Activated CD4-positive, alpha-beta T cell treated with anti-CD3 and anti-CD28 coated beads, Interleukin-2, amount 10 ng/mL, durations not matched to agents 24 days and 14 days (primary cell): ENCODE measurements at regions of chr1 and their contacts with region 1.

Region 1: GRCh38 chr1:160607011-160607671 is 27.8 kb upstream of the CD84 start:
- DNase-seq: peak; percentile 91
- H3K4me3 Mint-ChIP-seq: peak overlapping the region; percentile 62
- H3K27ac Mint-ChIP-seq: peak overlapping the region; percentile 81
- H3K4me1 Mint-ChIP-seq: peaks cover 55% of the 10 kb centered on the region
- H3K27me3 Mint-ChIP-seq: no peaks in the 10 kb centered on the region

Region 2: GRCh38 chr1:160474392-160475242 is 132.5 kb before region 1 on chr1:
- intact Hi-C with region 1: loop called (anchors 5 kb)
- DNase-seq: peak; percentile 56
- H3K4me3 Mint-ChIP-seq: no peak overlapping the region
- H3K27ac Mint-ChIP-seq: no peak overlapping the region
- H3K4me1 Mint-ChIP-seq: peaks cover 12% of the 10 kb centered on the region
- H3K27me3 Mint-ChIP-seq: no peaks in the 10 kb centered on the region

Region 3: DNA sequence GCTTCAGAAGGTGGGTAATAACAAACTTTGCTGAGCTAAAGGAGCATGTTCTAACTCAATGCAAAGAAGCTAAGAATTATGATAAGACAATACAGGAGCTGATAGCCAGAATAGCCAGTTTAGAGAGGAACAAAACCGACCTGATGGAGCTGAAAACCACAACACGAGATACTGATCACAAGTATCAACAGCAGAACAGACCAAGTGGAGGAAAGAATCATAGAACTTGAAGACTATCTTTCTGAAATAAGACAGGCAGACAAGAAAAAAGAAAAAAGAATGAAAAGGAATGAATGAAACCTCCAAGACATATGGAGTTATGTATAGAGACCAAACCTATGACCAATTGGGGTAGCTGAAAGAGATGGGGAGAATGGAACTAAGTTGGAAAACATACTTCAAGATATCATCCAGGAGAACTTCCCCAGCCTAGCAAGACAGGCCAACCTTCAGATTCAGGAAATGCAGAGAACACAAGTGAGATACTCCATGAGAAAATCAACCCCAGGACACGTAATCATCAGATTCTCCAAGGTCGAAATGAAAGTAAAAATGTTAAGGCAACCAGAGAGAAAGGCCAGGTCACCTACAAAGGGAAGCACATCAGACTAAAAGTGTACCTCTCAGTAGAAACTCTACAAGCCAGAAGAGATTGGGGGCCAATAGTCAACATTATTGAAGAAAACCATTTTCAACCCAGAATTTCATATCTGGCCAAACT is 48.3 kb before region 1 on chr1:
- intact Hi-C with region 1: loop called (anchors 2 kb)
- DNase-seq: no peak
- H3K4me3 Mint-ChIP-seq: peak overlapping the region; percentile 73
- H3K27ac Mint-ChIP-seq: peak overlapping the region; percentile 78
- H3K4me1 Mint-ChIP-seq: peaks cover 46% of the 10 kb centered on the region
- H3K27me3 Mint-ChIP-seq: no peaks in the 10 kb centered on the region

Region 4: DNA sequence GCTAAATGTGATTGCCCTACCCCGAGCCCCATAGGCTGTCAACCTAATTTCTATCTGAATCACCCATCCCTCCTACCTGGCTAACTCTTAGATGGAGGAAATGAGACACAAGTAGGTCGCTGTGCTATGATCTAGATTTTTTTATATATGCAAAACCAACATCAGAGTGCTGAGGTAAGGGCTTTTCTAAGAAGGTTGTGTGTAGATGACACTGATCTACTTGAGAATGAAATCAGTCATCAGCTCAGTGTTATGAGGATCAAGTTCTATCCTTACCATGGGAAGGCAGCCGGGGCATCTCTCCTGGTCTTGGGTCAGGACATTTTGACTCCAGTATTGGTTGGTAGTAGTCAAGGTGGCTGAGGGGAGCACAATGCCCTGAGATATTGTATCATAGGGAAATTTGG is 16.1 kb after region 1 on chr1:
- intact Hi-C with region 1: loop called (anchors 2 kb)
- DNase-seq: peak; percentile 78
- H3K4me3 Mint-ChIP-seq: peak overlapping the region; percentile 75
- H3K27ac Mint-ChIP-seq: peak overlapping the region; percentile 99
- H3K4me1 Mint-ChIP-seq: peaks cover 83% of the 10 kb centered on the region
- H3K27me3 Mint-ChIP-seq: no peaks in the 10 kb centered on the region